Mammary epithelial cell (primary cell): ENCODE measurements at regions of chr10 and their contacts with region 1.

Region 1: DNA sequence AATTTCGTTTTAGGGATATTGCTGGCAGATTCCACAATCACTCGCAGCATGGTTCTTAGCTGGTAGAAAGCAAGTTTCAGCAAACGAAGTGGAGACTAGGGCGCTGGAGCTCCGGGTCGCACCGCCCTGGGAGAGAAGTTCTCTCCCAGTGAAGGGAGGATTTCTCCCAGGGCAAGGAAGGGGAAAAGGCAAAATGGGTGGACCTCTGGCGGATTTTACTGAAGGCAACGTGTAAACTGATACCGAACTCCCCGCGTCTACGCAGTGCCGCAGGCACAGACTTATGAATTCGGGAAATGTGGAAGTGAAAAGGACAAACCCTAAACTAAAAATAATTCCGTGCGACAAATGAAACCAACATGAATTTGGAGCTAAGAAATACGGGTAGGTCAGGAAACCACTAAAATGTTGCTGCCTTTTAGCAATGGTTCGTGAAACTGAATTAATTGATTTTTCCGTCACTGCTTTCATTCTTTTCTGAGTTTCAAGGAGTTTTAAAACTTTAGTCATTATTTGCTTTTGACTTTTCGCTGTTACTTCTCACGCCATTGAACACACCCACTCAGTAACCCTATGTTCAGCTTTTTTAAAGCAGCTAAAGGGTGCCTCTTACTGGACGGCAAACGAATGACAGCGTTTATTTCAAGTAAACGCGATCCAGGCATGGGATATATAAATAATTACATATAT is at the start of gene MYOF:
- DNase-seq: peak; percentile 82
- H3K4me3 ChIP-seq: peak within 1 kb of the TSS; percentile 47 to 88 (median 85)
- H3K27ac ChIP-seq: peak within 1 kb of the TSS; percentile 95
- H3K4me1 ChIP-seq: peaks cover 15% of the 10 kb centered on the region
- H3K27me3 ChIP-seq: no peaks in the 10 kb centered on the region
- CTCF ChIP-seq: peak; percentile 66 to 69
- total RNA-seq, gene MYOF: 273 to 311 TPM

Region 2: GRCh38 chr10:93288654-93289634 is 193.3 kb before region 1 on chr10:
- CTCF ChIA-PET with region 1: no interaction called
- dilution Hi-C with region 1: no loop called
- in situ Hi-C with region 1: no loop called
- intact Hi-C with region 1: loop called (anchors 5 kb)
- DNase-seq: peak; percentile 70
- H3K4me3 ChIP-seq: no peak overlapping the region
- H3K27ac ChIP-seq: no peak overlapping the region
- H3K4me1 ChIP-seq: peaks cover 13% of the 10 kb centered on the region
- H3K27me3 ChIP-seq: no peaks in the 10 kb centered on the region
- CTCF ChIP-seq: peak; percentile 69 to 80

Region 3: DNA sequence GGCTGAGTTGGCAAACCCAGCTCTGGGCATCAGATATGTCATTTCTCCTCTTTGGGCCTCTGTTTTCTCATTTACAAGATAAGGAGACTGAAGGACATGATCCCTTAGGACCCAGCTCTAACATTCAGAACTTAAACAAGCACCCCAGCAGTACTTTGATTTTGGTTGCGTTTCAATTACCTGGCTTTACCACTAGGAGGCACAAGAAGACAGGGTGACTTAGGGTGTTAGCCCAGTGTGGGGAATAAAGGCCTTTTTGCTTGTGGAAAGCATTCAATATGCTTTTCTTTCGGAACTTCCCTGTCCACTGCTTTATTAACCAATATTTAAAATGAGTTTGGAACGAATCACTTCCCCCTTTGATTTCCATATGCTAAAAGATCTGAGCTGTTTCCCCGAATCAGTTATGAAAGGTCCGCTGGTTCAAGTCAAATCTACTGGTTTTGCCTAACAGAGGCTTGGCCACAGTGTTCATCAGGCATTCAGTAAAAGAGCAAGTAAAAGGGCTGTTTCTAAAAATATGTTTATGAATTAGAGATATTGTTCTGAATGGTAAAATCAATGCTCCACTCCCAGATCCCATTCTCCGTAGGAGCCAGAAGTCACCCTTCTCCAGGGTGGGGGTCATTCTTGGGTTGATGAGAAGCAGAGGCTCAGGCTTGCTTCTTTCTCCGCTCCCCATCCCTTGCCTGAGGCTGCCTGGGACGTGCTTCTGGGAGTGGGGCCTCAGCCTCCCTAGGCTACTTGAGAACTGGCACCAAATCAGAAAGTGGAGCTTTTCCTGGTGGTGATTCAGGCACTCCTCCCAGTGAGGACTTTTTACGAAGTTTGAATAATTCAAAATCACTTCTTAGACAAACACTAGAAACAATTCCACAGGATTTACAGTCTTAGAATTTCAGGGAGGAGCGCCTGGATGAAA is 105.7 kb before region 1 on chr10:
- CTCF ChIA-PET with region 1: interaction called, 29 read pairs
- dilution Hi-C with region 1: no loop called
- in situ Hi-C with region 1: loop called (anchors 5 kb)
- intact Hi-C with region 1: loop called (anchors 1 kb)
- DNase-seq: peak; percentile 81
- H3K4me3 ChIP-seq: no peak overlapping the region
- H3K27ac ChIP-seq: peak overlapping the region; percentile 95
- H3K4me1 ChIP-seq: peaks cover 46% of the 10 kb centered on the region
- H3K27me3 ChIP-seq: no peaks in the 10 kb centered on the region
- CTCF ChIP-seq: peak; percentile 93 to 95

Region 4: GRCh38 chr10:93406364-93407145 is 75.7 kb before region 1 on chr10:
- CTCF ChIA-PET with region 1: no interaction called
- dilution Hi-C with region 1: no loop called
- in situ Hi-C with region 1: no loop called
- intact Hi-C with region 1: loop called (anchors 1 kb)
- DNase-seq: peak; percentile 45
- H3K4me3 ChIP-seq: no peak overlapping the region
- H3K27ac ChIP-seq: peak overlapping the region; percentile 77
- H3K4me1 ChIP-seq: peaks cover 15% of the 10 kb centered on the region
- H3K27me3 ChIP-seq: no peaks in the 10 kb centered on the region
- CTCF ChIP-seq: no peak

Region 5: GRCh38 chr10:93445097-93445960 is 37.0 kb before region 1 on chr10:
- CTCF ChIA-PET with region 1: no interaction called
- dilution Hi-C with region 1: no loop called
- in situ Hi-C with region 1: loop called (anchors 5 kb)
- intact Hi-C with region 1: loop called (anchors 1 kb)
- DNase-seq: peak; percentile 99
- H3K4me3 ChIP-seq: no peak overlapping the region
- H3K27ac ChIP-seq: peak overlapping the region; percentile 97
- H3K4me1 ChIP-seq: peaks cover 51% of the 10 kb centered on the region
- H3K27me3 ChIP-seq: no peaks in the 10 kb centered on the region
- CTCF ChIP-seq: no peak

Region 6: DNA sequence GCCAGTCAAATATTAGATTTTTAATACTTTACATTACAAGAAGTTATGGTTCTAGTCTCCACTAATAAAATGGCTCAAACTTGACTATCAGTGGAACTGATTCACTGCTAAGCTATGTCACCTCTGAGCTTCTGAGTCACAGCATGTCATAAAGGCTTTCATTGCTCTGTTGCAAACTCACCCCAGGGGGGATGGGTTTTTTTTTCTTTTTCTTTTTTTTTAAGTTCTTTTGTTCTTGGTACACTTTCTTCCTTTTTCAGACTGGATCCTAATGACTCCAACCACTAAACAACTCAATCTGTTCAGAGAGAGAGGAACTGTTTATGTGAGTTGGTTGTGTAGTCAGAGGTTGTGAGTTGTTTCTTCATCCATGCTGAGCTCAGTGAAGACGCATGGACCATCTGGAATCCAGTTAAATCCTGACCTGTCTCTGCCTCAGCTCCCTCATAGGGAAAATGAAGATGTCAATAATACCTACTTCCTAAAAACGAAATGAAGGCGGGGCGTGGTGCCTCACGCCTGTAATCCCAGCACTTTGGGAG is 11.1 kb before region 1 on chr10:
- CTCF ChIA-PET with region 1: no interaction called
- dilution Hi-C with region 1: no loop called
- in situ Hi-C with region 1: no loop called
- intact Hi-C with region 1: loop called (anchors 1 kb)
- DNase-seq: peak; percentile 90
- H3K4me3 ChIP-seq: no peak overlapping the region
- H3K27ac ChIP-seq: peak overlapping the region; percentile 94
- H3K4me1 ChIP-seq: peaks cover 91% of the 10 kb centered on the region
- H3K27me3 ChIP-seq: no peaks in the 10 kb centered on the region
- CTCF ChIP-seq: no peak